Activated B cell treated with CpG ODN at 0.5 μM for 24 hours (primary cell): ENCODE measurements at regions of chr4 and their contacts with region 1.

Region 1: GRCh38 chr4:10116580-10117358 is at the start of gene WDR1:
- DNase-seq: peak; percentile 90
- ATAC-seq: peak; percentile 86
- H3K4me3 Mint-ChIP-seq: peak within 1 kb of the TSS; percentile 91
- H3K27ac Mint-ChIP-seq: peak within 1 kb of the TSS; percentile 98
- H3K4me1 Mint-ChIP-seq: peaks cover 62% of the 10 kb centered on the region
- H3K27me3 Mint-ChIP-seq: no peaks in the 10 kb centered on the region
- CTCF ChIP-seq: no peak
- total RNA-seq, gene WDR1: 337 and 348 TPM in 2 replicates

Region 2: DNA sequence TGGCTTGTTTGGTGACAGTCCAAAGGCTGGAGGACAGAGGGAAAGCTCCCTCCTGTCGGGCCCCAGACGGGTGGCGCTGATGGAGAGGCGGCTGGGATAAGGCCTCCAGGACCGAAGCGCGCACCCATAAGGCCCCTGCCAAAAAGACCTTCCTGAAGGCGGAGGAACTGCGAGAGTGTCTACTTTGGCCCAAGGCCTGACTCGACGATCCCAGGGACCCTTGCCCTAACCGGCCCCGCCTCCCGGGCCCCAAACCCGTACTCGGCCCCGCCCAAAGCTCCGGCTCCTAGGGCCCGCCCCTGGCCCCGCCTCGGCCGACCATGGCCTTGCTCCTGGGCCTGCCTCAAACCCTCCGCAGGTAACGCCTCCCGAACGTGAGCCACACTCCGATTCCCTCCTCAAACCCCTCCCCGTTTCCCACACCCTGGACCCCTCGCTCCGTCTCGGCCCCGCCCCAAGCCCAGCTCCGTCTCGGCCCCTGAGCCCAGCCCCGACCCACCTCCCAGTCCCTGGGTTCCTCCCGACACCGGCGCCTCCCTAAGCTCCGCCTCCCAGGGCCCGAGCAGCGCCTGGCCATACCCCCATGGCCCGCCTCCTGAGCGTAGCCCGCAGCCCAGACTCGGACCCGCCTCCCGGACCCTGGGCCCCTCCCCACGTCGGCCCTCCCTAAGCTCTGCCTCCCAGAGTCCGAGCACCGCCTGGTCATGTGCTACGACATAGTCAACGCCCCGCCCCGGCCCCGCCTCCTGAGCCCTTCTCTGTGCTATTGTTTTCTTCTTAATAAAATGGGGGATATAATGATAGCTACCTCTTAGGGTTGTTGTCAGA is 425.3 kb before region 1 on chr4:
- CTCF ChIA-PET with region 1: no interaction called
- POLR2A ChIA-PET with region 1: interaction called, 14 read pairs
- intact Hi-C with region 1: loop called (anchors 1 kb)
- DNase-seq: peak; percentile 89
- ATAC-seq: peak; percentile 100
- H3K4me3 Mint-ChIP-seq: peak overlapping the region; percentile 89
- H3K27ac Mint-ChIP-seq: peak overlapping the region; percentile 85
- H3K4me1 Mint-ChIP-seq: peaks cover 12% of the 10 kb centered on the region
- H3K27me3 Mint-ChIP-seq: peaks cover 7% of the 10 kb centered on the region
- CTCF ChIP-seq: no peak

Region 3: GRCh38 chr4:9735515-9735914 is 381.3 kb before region 1 on chr4:
- CTCF ChIA-PET with region 1: no interaction called
- POLR2A ChIA-PET with region 1: no interaction called
- intact Hi-C with region 1: no loop called
- DNase-seq: no peak
- ATAC-seq: no peak
- H3K4me3 Mint-ChIP-seq: no peak overlapping the region
- H3K27ac Mint-ChIP-seq: no peak overlapping the region
- H3K4me1 Mint-ChIP-seq: no peaks in the 10 kb centered on the region
- H3K27me3 Mint-ChIP-seq: no peaks in the 10 kb centered on the region
- CTCF ChIP-seq: no peak

Region 4: GRCh38 chr4:9970392-9971013 is 146.3 kb before region 1 on chr4:
- CTCF ChIA-PET with region 1: no interaction called
- POLR2A ChIA-PET with region 1: no interaction called
- intact Hi-C with region 1: no loop called
- DNase-seq: no peak
- ATAC-seq: peak; percentile 61
- H3K4me3 Mint-ChIP-seq: no peak overlapping the region
- H3K27ac Mint-ChIP-seq: peak overlapping the region; percentile 73
- H3K4me1 Mint-ChIP-seq: peaks cover 15% of the 10 kb centered on the region
- H3K27me3 Mint-ChIP-seq: no peaks in the 10 kb centered on the region
- CTCF ChIP-seq: no peak

Region 5: GRCh38 chr4:10018818-10019461 is 97.8 kb before region 1 on chr4:
- CTCF ChIA-PET with region 1: interaction called, 3 read pairs
- POLR2A ChIA-PET with region 1: interaction called, 4 read pairs
- intact Hi-C with region 1: loop called (anchors 1 kb)
- DNase-seq: peak; percentile 85
- ATAC-seq: peak; percentile 99
- H3K4me3 Mint-ChIP-seq: peak overlapping the region; percentile 90
- H3K27ac Mint-ChIP-seq: peak overlapping the region; percentile 88
- H3K4me1 Mint-ChIP-seq: peaks cover 37% of the 10 kb centered on the region
- H3K27me3 Mint-ChIP-seq: no peaks in the 10 kb centered on the region
- CTCF ChIP-seq: peak; percentile 69

Region 6: GRCh38 chr4:10106421-10107039 is 10.2 kb before region 1 on chr4:
- CTCF ChIA-PET with region 1: no interaction called
- POLR2A ChIA-PET with region 1: interaction called, 20 read pairs
- intact Hi-C with region 1: no loop called
- DNase-seq: no peak
- ATAC-seq: peak; percentile 83
- H3K4me3 Mint-ChIP-seq: no peak overlapping the region
- H3K27ac Mint-ChIP-seq: peak overlapping the region; percentile 18
- H3K4me1 Mint-ChIP-seq: peaks cover 84% of the 10 kb centered on the region
- H3K27me3 Mint-ChIP-seq: no peaks in the 10 kb centered on the region
- CTCF ChIP-seq: no peak

Region 7: GRCh38 chr4:10454726-10455125 is 338.0 kb after region 1 on chr4:
- CTCF ChIA-PET with region 1: no interaction called
- POLR2A ChIA-PET with region 1: interaction called, 23 read pairs
- intact Hi-C with region 1: loop called (anchors 1 kb)
- DNase-seq: no peak
- ATAC-seq: no peak
- H3K4me3 Mint-ChIP-seq: no peak overlapping the region
- H3K27ac Mint-ChIP-seq: no peak overlapping the region
- H3K4me1 Mint-ChIP-seq: peaks cover 28% of the 10 kb centered on the region
- H3K27me3 Mint-ChIP-seq: peaks cover 12% of the 10 kb centered on the region
- CTCF ChIP-seq: no peak